HEK293T (cell line): ENCODE measurements at regions of chr5 and their contacts with region 1.

Region 1: GRCh38 chr5:132386644-132387286 is 17.3 kb downstream of the SLC22A5 start:
- DNase-seq: peak; percentile 48

Region 2: DNA sequence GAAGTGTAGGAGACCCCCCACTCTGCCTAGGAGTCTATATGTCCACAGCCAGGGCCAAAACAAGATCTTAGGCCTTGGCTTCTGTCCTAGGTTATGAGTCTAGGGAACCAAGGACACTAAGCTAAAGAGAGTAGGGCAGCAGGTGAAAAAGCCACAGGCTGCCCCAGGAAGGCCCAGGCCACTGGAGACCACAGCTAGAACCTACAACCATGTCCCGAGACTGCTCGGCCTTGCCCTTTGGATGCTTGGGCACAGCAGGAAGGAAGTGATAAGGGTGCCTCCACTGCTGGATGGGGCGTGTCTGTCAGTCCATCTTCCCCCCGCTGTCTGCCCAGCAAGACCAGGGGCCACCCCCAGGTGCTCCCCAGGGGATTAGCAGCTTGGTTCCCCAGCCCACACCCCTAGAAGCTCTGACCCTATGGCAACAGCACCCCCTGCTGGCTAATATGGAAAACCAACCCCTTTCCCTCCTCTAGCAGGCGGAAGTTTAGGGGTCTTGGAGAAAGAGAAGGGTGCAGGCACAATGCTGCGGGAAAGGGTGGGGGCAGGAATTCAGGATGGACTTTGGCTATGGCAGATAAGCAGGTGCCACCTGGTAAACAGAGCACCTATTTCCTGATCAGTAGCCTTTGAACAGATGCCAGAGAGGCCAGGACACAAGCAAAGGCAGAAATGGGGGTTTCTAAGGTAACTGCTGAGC is 114.3 kb after region 1 on chr5:
- CTCF ChIA-PET with region 1: interaction called, 19 read pairs
- POLR2A ChIA-PET with region 1: no interaction called
- DNase-seq: peak; percentile 65